WTC11 (cell line): ENCODE measurements at regions of chr1 and their contacts with region 1.

Region 1: DNA sequence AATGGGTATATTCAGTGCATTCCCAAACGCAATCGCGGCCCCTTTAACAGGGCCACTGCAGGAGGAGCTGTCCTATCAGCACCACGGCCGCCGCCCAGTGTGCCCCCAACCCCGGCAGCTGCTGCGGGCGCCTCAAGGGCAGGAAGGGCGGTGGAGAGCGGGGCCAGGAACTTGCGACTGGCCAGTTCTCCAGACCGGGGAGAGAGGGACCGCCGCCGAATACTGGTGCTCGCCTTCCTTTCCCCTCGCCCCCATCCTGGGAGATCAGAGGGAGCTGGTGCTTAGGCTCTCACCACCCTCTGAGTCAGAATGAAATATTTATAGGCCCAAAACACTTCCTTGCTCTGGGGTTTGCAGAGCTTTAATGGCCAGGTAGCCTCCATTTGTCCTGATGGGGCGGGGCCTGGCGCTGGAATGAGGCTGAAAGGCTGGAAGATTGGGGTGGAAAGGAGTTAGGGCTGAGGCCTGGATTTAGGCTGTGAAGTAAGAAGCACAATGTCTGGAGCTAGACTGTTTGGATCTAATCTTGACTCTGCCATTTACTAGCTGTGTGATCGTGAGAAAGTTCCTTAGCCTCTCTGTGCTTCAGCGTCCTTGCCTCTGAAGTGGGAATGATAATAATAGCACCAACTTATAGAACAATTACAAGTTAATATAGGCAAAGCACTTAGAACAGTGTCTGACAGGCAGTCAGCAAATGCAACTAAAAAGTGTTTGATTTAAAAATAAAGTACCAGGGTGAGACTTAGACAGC is 75.5 kb downstream of the NAV1 start:
- DNase-seq: peak; percentile 89
- ATAC-seq: peak; percentile 96
- H3K4me3 Mint-ChIP-seq: peak overlapping the region; percentile 66
- H3K27ac Mint-ChIP-seq: no peak overlapping the region
- H3K4me1 Mint-ChIP-seq: peaks cover 28% of the 10 kb centered on the region
- H3K27me3 Mint-ChIP-seq: peaks cover 4% of the 10 kb centered on the region
- CTCF ChIP-seq: no peak

Region 2: GRCh38 chr1:201530741-201531531 is 83.5 kb before region 1 on chr1:
- CTCF ChIA-PET with region 1: interaction called, 10 read pairs
- POLR2A ChIA-PET with region 1: no interaction called
- DNase-seq: peak; percentile 90
- ATAC-seq: peak; percentile 96
- H3K4me3 Mint-ChIP-seq: no peak overlapping the region
- H3K27ac Mint-ChIP-seq: 0 out of 2 replicates have a peak overlapping the region, but pooled peaks have one; percentile 50
- H3K4me1 Mint-ChIP-seq: peaks cover 23% of the 10 kb centered on the region
- H3K27me3 Mint-ChIP-seq: 0 out of 2 replicates have a peak, but pooled peaks cover under 1% of the 10 kb centered on the region
- CTCF ChIP-seq: peak; percentile 62

Region 3: DNA sequence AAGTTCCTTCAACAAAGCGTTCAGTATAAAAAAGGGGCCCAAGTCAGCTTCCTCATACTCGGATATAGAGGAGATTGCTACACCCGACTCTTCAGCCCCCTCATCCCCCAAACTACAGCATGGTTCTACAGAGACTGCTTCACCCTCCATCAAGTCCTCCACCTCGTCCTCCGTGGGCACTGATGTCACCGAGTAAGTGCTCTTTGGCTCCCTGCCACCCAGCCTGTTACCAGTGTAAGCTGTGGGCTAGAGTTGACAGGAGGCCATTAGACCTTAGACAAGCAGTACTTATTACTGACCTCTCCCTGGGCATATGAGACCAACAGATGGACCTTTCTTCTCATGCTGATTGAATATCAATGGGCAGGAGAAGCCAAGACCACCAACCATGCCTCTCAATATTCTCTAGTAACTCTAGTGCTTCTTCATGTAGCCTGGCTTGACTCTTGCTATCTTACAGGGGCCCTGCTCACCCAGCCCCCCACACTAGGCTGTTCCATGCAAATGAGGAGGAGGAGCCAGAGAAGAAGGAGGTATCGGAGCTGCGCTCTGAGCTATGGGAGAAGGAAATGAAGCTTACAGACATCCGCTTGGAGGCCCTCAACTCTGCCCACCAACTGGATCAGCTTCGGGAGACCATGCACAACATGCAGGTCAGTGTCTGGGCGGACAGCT is 193.7 kb after region 1 on chr1:
- CTCF ChIA-PET with region 1: no interaction called
- POLR2A ChIA-PET with region 1: no interaction called
- DNase-seq: no peak
- ATAC-seq: 0 out of 2 replicates have a peak, but pooled peaks have one; percentile 41
- H3K4me3 Mint-ChIP-seq: no peak overlapping the region
- H3K27ac Mint-ChIP-seq: no peak overlapping the region
- H3K4me1 Mint-ChIP-seq: no peaks in the 10 kb centered on the region
- H3K27me3 Mint-ChIP-seq: no peaks in the 10 kb centered on the region
- CTCF ChIP-seq: no peak